ENCODE measurements at regions of chr1 and their contacts with region 1.

Region 1: DNA sequence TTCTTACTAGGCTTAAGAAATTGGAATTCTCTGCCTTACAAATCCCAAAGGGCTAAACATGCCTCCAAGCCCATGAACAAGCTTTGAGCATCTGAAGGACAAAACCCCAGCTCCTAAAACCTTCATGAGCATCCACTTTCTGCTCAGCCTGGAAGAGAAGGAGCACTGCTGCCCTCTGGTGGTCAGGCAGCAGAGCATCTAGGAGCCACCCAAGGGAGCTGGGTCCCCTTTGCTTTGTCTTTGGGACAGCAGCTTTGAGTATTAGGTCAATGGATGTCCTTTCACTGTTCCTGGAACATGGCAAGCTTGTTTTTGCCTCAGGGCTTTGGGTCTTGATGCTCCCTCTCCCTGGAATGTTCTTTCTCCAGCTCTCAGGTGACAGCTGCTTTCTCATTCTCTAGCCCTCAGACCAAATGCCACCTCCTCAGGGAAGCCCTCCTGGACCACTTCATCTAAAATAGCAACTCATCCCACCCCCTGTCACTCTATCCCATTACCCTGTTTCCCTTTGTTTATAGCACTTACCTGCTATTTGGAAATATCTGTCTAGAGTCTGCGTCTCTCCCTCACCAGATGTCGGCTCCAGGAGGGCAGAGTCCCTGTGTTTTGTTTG is 25.7 kb downstream of the RAB7B start:
- DNase-seq: peak; percentile 74 to 75
- H3K4me3 ChIP-seq: no peak overlapping the region
- H3K27ac ChIP-seq: no peak overlapping the region
- H3K4me1 ChIP-seq: peaks cover 27% of the 10 kb centered on the region
- H3K27me3 ChIP-seq: no peaks in the 10 kb centered on the region
- CTCF ChIP-seq: peak; percentile 98

Region 2: DNA sequence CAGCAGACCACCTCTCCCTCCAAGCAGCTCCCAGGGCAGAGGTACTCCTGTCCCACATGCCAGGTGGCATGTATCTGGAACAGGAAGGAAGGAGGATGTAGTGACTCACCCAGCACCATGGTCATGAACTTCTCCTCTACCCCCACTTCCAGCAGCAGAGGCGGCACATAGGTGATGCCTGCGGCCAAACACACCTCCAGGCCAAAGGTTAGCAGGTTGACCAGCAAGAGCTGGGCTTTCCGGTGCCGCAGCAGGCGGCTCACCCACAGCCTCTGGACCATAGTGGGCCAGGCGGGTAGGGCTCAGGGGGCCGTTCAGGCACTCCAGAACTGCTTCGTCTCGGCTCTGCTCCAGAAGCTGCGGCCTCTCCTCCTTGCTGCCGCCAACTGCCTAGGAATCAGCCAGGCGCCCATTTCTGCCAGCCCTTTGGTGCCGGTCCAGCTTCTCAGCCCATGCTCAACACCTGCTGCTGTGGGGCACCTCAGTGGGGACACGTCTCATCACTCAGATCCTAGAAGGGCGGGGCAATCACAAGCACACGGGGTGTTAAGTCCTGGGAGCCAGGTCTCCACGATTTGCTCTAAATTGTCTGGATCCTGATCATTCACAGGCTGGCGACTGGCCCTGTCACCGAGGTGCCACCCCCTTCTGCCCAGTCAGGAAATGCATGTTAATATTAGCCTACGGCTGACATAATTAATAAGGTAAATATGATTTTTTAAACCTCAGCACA is 313.0 kb before region 1 on chr1:
- CTCF ChIA-PET with region 1: interaction called, 6 read pairs
- POLR2A ChIA-PET with region 1: no interaction called
- intact Hi-C with region 1: loop called (anchors 2 kb)
- DNase-seq: peak; percentile 81 to 95
- H3K4me3 ChIP-seq: peak overlapping the region; percentile 47; the same call in 1 of the 2 replicates
- H3K27ac ChIP-seq: peak overlapping the region; percentile 90
- H3K4me1 ChIP-seq: peaks cover 81% of the 10 kb centered on the region
- H3K27me3 ChIP-seq: no peaks in the 10 kb centered on the region
- CTCF ChIP-seq: no peak

Region 3: GRCh38 chr1:205791568-205792180 is 185.8 kb before region 1 on chr1:
- CTCF ChIA-PET with region 1: interaction called, 26 read pairs
- POLR2A ChIA-PET with region 1: no interaction called
- intact Hi-C with region 1: loop called (anchors 1 kb)
- DNase-seq: peak in 1 of 2 experiments; percentile 63
- H3K4me3 ChIP-seq: no peak overlapping the region
- H3K27ac ChIP-seq: no peak overlapping the region
- H3K4me1 ChIP-seq: no peaks in the 10 kb centered on the region
- H3K27me3 ChIP-seq: no peaks in the 10 kb centered on the region
- CTCF ChIP-seq: peak; percentile 86

Region 4: DNA sequence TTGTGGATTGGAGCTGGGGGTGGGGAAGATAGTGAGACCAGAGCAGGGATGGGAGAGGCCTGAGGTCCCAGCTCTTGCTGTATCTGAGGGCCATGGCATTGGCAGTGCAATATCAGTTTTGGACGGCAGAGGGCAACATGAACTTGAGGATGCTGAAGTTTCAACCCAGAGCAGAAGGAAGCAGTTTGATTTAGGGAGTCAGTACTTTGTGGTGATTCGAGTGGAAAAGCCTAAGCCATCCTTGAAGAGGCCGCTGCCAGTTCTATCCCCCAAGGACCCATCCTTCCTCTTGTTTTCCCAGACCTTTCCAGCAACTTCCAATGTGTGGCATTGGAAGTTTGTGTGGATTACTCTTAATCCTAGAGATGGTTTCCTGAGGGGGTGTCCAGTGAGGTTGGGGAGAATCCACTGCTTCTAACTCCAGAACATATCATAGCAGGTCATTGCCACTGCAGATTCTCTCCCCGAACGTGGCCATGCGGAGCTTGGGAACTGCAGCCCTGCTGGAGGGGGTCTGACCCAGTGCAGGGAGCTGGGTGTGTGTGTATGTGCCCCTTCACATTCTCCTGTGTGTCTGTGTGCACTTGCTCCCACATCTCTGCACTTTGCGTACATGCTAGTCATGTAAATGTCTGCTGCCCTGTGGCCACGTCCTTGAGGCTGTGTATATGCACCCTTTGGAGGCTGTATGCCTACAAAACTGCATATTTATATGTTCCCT is 58.3 kb before region 1 on chr1:
- CTCF ChIA-PET with region 1: interaction called, 79 read pairs
- POLR2A ChIA-PET with region 1: no interaction called
- intact Hi-C with region 1: loop called (anchors 1 kb)
- DNase-seq: peak; percentile 66 to 76
- H3K4me3 ChIP-seq: no peak overlapping the region
- H3K27ac ChIP-seq: no peak overlapping the region
- H3K4me1 ChIP-seq: no peaks in the 10 kb centered on the region
- H3K27me3 ChIP-seq: no peaks in the 10 kb centered on the region
- CTCF ChIP-seq: peak; percentile 97

Region 5: DNA sequence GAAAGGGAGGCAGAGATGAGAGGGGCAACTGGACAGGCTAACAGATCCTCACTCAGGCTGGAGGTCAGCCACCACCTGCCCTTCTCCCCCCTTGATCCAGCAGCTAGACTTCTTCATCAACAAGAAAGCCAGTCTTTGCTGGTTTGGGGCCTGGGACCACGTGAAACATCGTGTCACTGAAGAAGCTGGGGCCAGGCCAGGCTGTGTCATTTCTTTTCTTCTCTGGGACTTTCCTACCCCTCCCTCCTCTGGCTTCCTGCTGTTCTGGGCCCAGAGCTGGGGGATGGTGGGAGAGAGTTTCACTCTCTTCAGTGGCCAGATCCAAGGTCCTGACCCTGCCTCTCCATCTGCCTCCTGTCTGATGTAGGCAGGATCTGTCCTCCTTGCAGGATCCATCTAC is 16.1 kb before region 1 on chr1:
- CTCF ChIA-PET with region 1: interaction called, 13 read pairs
- POLR2A ChIA-PET with region 1: no interaction called
- intact Hi-C with region 1: no loop called
- DNase-seq: peak in 1 of 2 experiments; percentile 39
- H3K4me3 ChIP-seq: no peak overlapping the region
- H3K27ac ChIP-seq: peak overlapping the region; percentile 97
- H3K4me1 ChIP-seq: peaks cover 65% of the 10 kb centered on the region
- H3K27me3 ChIP-seq: no peaks in the 10 kb centered on the region
- CTCF ChIP-seq: no peak

Region 6: GRCh38 chr1:206143537-206144172 is 166.1 kb after region 1 on chr1:
- CTCF ChIA-PET with region 1: no interaction called
- POLR2A ChIA-PET with region 1: no interaction called
- intact Hi-C with region 1: no loop called
- DNase-seq: no peak
- H3K4me3 ChIP-seq: no peak overlapping the region
- H3K27ac ChIP-seq: no peak overlapping the region
- H3K4me1 ChIP-seq: no peaks in the 10 kb centered on the region
- H3K27me3 ChIP-seq: peaks cover 14% of the 10 kb centered on the region
- CTCF ChIP-seq: no peak

Measured in PC-9 (cell line).